ENCODE measurements at regions of chr20 and their contacts with region 1.

Region 1: GRCh38 chr20:5529331-5530148 is 212.8 kb upstream of the PROKR2 start:
- DNase-seq: peak; percentile 76
- CTCF ChIP-seq: peak; percentile 92

Region 2: GRCh38 chr20:5316188-5317158 is 213.1 kb before region 1 on chr20 and contains the start of gene PROKR2:
- CTCF ChIA-PET with region 1: no interaction called
- POLR2A ChIA-PET with region 1: no interaction called
- DNase-seq: peak; percentile 29
- CTCF ChIP-seq: no peak

Region 3: GRCh38 chr20:5513975-5514516 is 15.5 kb before region 1 on chr20:
- CTCF ChIA-PET with region 1: interaction called, 15 read pairs
- POLR2A ChIA-PET with region 1: no interaction called
- DNase-seq: no peak
- CTCF ChIP-seq: no peak

Region 4: GRCh38 chr20:5550733-5551529 is 21.4 kb after region 1 on chr20:
- CTCF ChIA-PET with region 1: interaction called, 21 read pairs
- POLR2A ChIA-PET with region 1: no interaction called
- DNase-seq: no peak
- CTCF ChIP-seq: no peak

Region 5: DNA sequence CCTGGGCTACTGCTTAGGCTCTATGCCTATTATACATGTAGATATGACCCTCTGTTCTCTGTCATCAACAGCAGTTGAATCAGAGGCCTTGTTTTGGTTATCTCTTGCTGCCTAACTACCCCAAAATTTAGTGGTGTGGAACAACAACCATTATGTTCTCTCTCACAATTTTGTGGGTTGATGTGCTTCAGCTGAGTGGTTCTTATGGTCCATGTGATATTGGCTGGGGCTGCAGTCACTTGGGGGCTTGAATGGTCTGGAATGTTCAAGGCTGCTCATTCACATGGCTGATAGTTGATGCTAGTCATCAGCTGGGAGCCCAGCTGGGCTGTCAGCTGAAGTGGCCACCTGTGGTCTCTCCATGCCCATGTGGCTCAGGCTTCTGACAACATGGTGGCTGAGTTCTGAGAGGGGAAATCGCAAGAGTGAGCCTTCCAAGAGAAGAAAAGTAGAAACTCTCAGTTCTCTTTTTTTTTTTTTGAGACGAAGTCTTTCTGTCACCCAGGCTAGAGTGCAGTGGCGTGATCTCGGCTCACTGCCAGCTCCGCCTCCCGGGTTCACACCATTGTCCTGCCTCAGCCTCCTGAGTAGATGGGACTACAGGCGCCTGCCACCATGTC is 268.4 kb after region 1 on chr20:
- CTCF ChIA-PET with region 1: interaction called, 15 read pairs
- POLR2A ChIA-PET with region 1: no interaction called
- DNase-seq: peak; percentile 66
- CTCF ChIP-seq: no peak

Region 6: DNA sequence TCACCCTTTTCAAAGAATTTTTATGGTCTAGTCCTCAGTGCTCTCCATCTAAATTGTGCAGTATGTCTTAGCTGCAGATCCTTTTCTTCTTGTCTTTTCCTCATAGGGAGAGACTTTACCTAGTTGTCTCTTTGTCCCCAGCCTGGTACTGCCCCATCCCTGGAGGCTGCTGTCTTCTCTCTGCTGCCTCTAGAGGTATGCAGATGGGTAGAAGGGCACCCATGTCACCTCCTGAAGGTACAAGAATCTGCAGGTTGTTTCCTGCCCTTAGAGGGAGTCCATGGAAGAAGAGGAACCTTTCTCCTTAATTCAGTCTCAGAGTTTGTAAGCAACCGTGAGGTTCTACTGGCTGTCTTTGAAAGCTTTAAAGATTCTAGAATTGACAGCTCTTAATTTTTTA is 460.0 kb after region 1 on chr20:
- CTCF ChIA-PET with region 1: interaction called, 12 read pairs
- POLR2A ChIA-PET with region 1: no interaction called
- DNase-seq: no peak
- CTCF ChIP-seq: peak; percentile 2

Region 7: DNA sequence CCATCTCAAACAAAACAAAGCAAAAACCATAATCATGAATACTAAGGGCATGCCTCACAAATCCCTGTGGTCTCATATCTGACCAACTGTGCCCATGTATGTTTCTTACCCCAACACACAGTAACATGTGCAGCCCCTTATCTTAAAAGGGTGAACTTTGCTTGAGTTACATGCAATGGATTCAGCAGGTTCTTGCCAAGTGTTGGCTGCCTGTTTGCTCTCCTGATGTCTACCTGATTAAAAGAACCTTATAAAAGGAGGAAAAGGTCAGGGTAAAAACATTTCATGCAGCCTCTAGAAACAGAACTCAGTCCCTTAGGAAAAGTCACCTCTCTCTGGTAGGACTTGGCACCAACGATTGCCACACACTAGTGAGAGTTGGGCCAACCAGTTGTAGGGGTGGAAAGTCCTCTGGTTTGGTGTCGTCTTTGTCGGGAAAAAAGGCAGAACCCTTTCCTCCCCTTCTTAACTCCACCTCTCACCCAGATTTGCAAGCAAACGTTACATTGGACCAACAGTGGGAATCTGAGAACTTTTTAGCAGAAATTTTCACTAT is 538.3 kb after region 1 on chr20:
- CTCF ChIA-PET with region 1: interaction called, 99 read pairs
- POLR2A ChIA-PET with region 1: no interaction called
- DNase-seq: no peak
- CTCF ChIP-seq: no peak